ENCODE measurements at regions of chr20 and their contacts with region 1.

Region 1: DNA sequence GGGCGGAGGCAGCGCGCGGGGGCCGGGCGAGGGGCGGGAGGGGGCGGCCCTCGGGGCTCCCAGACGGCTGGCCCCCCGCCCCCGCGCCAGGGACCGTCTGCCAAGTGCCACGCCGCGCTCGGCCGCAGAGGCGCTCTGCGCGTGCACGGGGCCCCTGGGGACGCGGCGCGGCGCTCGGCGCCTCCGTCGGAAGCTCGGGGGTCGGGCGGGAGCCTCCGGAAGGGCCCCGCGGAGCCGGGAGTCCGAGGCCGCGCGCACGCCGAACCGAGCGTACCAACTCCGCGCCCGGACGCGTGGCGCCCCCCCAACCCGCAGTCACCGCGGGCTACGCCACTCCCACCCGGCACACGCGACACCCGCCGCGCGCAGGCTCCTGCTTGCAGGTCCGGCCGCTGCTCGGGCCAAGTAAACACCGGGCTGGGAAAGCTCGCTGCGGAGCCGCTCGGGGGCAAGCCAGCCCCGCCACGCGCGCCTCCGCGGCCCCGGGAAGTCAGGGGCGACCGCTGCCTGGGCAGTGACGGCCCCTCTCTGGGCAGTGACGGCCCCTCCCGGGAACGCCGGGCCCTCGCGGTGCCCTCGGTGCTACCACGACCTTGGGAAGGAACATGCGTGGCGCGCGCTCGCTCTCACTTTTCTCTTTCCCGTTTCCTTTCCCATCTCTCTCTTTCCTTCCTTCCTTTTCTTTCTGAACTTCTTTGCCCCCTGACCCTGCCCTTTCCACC is 384 bp upstream of the PREX1 start:
- DNase-seq: peak; percentile 84
- H3K4me3 Mint-ChIP-seq: peak overlapping the region; percentile 80
- H3K27ac Mint-ChIP-seq: peak overlapping the region; percentile 67
- H3K4me1 Mint-ChIP-seq: peaks cover 38% of the 10 kb centered on the region
- H3K27me3 Mint-ChIP-seq: peaks cover 66% of the 10 kb centered on the region

Region 2: DNA sequence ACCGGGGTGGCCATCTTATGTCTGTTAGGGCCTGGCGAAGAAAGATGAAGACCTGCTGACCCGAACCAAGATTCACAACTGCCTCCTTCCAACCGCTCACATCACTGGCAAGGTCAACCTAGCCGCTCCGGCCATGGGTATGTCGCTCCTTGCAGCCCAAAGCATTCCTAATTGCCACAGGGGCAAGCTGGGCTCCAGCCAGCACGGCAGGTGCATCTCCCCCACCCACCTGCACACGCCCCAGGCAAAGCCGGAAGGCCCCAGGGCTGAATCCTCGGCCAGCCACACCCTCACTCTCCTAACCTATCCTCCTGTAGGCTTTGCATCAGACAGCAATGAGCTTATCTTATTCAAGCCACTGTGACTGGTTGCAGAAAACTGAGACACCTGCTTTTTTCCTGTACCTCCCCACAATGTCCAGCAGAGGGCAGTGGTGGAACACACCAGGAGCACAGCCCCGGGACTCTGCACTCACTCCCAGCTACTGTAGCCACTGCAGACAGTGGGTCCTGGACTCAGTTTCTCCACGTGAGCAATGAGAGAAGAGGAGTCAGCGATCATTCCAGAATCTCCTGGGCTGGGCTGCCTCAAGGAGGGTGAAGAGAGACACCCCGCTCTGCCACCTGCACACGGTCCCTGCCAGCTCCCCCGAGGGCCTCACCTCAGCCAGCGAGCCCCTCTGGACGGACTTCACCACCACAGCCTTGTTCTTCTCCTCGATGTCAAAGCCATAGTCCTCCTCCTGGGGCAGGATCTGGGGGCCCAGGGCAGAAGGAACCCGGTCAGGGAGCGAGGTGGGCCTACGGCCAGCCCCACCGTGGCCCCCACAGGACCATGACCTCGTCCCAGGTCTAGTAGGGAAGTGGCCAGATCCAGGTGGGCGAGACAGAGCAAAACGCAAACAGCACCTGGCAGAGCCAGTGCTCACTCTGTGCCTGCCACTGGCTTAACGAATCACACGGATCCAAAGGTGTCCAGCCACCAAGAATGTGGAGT is 170.4 kb before region 1 on chr20:
- CTCF ChIA-PET with region 1: interaction called, 11 read pairs
- DNase-seq: peak; percentile 78
- H3K4me3 Mint-ChIP-seq: no peak overlapping the region
- H3K27ac Mint-ChIP-seq: peak overlapping the region; percentile 16
- H3K4me1 Mint-ChIP-seq: peaks cover 10% of the 10 kb centered on the region
- H3K27me3 Mint-ChIP-seq: no peaks in the 10 kb centered on the region

Region 3: GRCh38 chr20:48738399-48739304 is 89.5 kb before region 1 on chr20:
- CTCF ChIA-PET with region 1: interaction called, 12 read pairs
- DNase-seq: peak; percentile 74
- H3K4me3 Mint-ChIP-seq: peak overlapping the region; percentile 9
- H3K27ac Mint-ChIP-seq: peak overlapping the region; percentile 84
- H3K4me1 Mint-ChIP-seq: peaks cover 64% of the 10 kb centered on the region
- H3K27me3 Mint-ChIP-seq: no peaks in the 10 kb centered on the region

Measured in activated naive CD4-positive, alpha-beta T cell treated with anti-CD3 and anti-CD28 coated beads, Interleukin-2, amount 10 ng/mL, durations not matched to agents 7 days and 5 days (primary cell).